ENCODE measurements at regions of chr1 and their contacts with region 1.

Region 1: DNA sequence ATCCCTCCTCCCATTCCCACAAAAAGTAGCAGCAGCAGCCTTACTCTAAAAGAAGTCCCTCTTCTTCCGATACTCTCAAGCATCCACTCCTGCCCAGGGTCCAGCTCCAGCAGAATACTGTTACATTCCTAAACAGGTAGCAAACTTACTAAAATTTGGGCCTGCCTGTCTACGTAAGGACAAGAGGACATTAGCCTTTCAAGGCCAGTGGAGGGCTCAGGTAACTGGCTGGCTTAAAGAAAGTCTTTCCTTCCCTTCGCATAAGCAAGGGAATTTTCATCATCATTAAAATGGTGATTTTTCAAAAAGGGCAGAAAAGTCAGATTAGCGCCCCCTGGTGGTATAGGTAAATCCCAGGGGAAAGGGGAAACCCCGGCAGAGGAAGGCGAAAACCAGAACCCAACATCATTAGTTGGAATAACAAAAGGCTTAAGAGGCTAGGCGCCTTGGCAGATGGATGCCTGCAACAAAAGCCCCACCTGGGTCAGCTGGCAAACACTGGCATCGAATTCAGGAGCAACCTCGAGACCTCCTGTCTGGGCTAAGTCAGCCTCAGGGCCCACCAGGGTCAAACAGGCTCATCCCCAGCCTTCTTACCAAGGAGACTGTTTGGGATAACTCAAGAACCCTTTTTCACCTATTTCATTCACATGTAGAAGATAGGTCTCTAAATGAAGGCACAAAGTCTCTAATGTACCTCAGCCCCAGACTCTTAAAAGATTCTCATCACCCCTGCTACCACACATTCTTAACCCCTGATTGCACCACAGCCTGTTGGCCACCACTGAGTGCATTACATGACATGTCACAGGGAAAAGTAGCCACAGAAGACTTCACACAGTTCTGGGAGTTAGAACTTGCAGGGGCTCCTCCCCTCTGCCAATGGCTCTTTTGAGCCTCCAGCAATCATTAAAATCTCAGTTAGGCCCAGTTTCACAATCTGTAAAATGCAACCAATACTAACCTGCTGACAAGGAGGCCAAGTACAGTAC is 36.7 kb downstream of the ERI3 start:
- DNase-seq: peak; percentile 27
- ATAC-seq: peak in 1 of 2 donors; percentile 27

Region 2: GRCh38 chr1:44213222-44214112 is 104.9 kb before region 1 on chr1 and contains the start of gene DMAP1:
- intact Hi-C with region 1: loop called in 1 of 2 experiments (anchors 5 kb)
- DNase-seq: peak; percentile 84
- ATAC-seq: peak; percentile 94 to 95
- total RNA-seq, gene DMAP1: 23.6 to 25.4 TPM

Region 3: DNA sequence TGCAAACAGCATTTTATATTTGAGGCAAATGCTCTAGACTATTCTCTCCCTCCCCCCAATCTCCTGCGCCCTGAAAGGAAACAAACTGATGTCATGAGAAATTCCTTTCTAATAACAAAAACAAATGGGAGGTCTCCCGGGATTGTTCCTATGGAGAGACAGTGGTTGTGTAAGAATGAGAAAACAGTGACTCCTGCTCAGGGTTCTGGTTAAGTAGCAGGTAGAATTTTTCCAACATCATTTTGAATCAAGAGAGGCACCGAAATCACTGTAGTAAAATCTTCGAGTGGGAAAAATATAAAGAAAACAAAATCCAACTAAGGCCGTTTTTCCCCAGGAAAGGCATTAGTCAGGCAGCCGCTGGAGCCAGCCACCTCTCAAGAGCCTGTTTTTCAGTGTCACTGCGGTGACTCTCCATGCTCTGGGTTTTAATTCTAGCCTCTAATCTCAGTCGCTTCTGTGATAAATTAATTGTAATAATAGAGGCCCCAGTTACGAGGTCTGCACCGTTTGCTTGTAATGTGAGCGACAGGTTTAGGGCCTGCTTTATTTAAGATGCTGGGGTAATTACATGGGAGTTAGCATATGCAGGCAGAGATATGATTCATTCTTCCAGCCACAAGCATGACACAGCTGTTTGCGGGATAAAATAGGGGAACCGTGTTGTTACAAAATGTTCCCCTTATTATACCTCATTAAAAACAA is 167.0 kb after region 1 on chr1:
- intact Hi-C with region 1: no loop called
- DNase-seq: no peak
- ATAC-seq: peak in 1 of 2 donors; percentile 73

Region 4: DNA sequence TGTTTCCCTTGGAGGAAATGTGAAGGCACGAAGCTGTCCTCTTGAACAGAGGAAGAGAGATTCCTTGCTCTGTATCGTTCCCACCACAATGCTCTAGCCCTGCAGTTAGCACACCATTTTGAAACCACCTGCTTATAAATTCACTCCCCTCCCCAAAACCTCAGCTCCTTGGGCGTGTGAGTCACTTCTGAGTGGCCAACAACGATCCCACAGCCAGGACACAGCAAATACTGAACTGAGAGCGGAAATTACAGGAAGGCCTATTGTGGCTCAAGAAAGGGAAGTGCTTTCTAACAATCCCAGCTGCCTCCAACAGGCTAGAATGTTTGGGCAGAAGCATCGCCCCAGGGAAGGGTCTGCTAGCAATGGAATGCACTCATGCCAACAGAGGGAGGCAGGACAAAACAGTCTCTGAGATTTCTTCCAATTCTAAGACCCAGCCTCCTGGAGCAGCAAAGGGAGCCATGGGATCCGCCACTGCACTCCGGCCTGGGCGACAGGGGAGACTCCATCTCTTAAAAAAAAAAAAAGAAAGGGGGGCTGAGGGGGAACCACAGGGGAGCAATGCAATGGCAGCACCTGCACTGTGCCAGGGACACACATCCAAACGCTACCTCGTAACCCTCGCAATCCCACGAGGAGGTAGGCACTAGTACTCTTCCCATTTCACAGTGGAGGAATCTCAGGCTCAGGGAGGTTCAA is 354.0 kb after region 1 on chr1:
- intact Hi-C with region 1: no loop called
- DNase-seq: no peak
- ATAC-seq: no peak